ENCODE measurements at regions of chr6 and their contacts with region 1.

Region 1: GRCh38 chr6:37169496-37170272 is at the start of gene PIM1:
- DNase-seq: peak; percentile 100
- ATAC-seq: peak; percentile 94
- H3K4me3 ChIP-seq: peak within 1 kb of the TSS; percentile 69
- H3K27ac ChIP-seq: peak within 1 kb of the TSS; percentile 93
- H3K4me1 ChIP-seq: peaks cover 22% of the 10 kb centered on the region
- H3K27me3 ChIP-seq: no peaks in the 10 kb centered on the region
- CTCF ChIP-seq: no peak
- total RNA-seq, gene PIM1: 55.3 TPM

Region 2: DNA sequence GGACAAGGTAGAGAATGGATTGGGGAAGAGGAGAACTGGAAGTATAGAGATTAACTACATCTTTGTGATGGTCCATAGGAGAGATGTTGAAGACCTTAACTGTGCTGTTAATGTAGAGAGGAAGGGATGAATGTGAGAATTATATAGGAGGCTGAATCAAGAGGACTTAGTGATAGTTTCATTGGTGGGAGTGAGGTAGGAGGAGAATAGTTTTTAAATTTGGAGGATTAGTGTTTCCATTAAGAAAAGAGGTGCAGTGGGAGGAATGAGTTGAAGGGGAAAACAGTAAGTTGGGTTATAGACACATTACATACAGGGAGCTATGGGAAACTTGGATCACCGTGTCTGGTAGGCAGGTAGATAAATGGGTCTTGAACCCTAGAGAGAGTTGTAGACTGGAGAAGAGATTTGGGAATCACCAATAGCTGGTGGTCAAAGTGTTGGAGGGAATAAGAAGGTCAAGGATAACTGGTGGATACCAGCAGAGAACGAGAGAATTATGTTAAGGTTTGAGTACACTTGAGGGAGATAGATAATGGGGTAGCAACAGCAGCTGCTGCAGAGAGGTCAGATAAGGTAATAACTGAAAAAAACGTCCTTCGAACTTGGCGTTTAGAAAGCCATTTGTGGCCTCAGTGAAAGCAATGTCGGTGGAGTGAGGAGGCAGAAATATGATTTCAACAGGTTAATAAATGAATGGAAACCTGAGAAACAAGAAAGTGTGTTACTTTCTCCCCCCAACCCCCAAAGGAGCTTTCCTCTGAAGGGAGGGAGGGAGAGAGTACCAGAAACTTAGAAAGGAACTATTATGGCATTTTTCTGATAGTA is 280.8 kb before region 1 on chr6:
- intact Hi-C with region 1: no loop called
- DNase-seq: no peak
- ATAC-seq: no peak
- H3K4me3 ChIP-seq: no peak overlapping the region
- H3K27ac ChIP-seq: no peak overlapping the region
- H3K4me1 ChIP-seq: peaks cover 5% of the 10 kb centered on the region
- H3K27me3 ChIP-seq: no peaks in the 10 kb centered on the region
- CTCF ChIP-seq: no peak

Region 3: GRCh38 chr6:37048851-37049757 is 120.6 kb before region 1 on chr6:
- intact Hi-C with region 1: loop called (anchors 5 kb)
- DNase-seq: no peak
- ATAC-seq: no peak
- H3K4me3 ChIP-seq: no peak overlapping the region
- H3K27ac ChIP-seq: peak overlapping the region; percentile 75
- H3K4me1 ChIP-seq: peaks cover 33% of the 10 kb centered on the region
- H3K27me3 ChIP-seq: no peaks in the 10 kb centered on the region
- CTCF ChIP-seq: no peak